Gastrocnemius medialis (tissue), 4 donors: ENCODE measurements at regions of chr1 and their contacts with region 1.

Region 1: DNA sequence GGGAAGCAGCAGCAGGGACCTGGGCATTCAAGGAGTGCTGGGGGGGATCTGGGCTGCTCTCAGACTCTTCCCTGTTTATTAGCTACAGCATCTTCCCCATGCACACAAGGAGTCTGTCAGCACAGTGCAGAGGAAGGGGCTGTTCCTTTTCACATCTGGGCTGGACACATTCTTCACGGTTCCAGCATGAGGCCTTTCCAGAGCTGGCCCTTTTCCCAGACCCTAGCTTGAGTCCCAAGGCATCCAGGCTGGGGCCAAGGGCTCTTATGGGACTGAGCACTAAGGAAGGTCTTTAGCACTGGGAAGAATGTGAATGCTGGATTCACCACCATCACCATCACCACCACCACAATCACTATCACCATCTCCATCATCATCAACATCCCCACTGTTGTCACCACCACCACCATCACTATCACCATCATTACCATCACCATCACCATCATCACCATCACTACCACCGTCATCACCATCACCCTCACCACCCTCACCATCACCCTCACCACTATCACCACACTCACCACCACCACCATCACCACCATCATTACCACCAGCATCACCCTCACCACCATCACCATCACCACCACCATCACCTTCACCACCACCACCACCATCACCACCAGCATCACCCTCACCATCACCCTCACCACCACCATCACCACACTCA is 28.4 kb downstream of the PARK7 start:
- DNase-seq: no peak
- ATAC-seq: no peak
- H3K4me3 ChIP-seq: no peak overlapping the region
- H3K27ac ChIP-seq: no peak overlapping the region
- H3K4me1 ChIP-seq: peaks cover 5 to 6% of the 10 kb centered on the region in 2 donors
- H3K27me3 ChIP-seq: no peaks in the 10 kb centered on the region
- CTCF ChIP-seq: no peak
- POLR2A ChIP-seq: no peak

Region 2: DNA sequence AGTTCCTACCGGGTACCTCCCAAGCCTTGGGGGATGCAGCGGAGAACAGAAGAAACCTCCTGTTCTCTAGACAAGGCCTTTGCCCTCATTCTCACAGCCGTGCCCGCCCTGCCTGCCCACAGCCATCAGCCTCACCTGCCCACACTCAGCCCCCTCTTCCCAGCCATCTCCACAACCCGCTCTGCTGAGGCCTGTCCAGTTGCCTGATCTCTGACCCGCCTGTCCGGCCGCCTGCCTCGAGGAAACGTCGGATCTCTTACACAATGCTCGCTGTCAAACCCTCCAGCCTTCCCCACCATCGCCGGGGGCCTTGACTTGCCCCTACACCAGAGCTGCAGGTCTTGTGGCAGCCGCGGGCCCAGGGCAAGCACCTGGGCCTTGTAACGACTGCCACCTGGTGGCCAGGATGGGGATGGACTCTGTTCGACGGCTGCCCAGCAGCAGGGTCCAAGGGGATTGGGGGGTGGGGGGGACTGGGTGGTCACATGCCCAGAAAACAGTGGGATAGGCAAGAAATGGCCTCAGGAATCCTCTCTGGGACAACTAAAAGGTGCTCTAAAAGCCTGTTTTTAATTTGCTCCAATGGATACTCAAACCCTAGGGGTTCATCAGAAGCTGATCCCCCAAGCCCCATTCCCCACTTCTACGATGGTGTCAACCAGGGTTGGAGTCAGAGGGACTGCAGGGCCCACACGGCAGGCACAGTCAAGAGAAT is 359.0 kb after region 1 on chr1:
- in situ Hi-C with region 1: loop called in 2 of 4 experiments (anchors 10 kb)
- intact Hi-C with region 1: no loop called
- DNase-seq: peak in 1 of 2 donors; percentile 61
- ATAC-seq: peak; percentile 31 to 34
- H3K4me3 ChIP-seq: no peak overlapping the region
- H3K27ac ChIP-seq: peak overlapping the region in 1 of 4 donors; percentile 35
- H3K4me1 ChIP-seq: peaks cover 22 to 33% of the 10 kb centered on the region in 2 donors
- H3K27me3 ChIP-seq: no peaks in the 10 kb centered on the region
- CTCF ChIP-seq: peak; percentile 70 to 94 (median 93)
- POLR2A ChIP-seq: no peak